ENCODE measurements at regions of chr3 and their contacts with region 1.

Region 1: GRCh38 chr3:149812606-149813366 is at the start of gene RNF13:
- DNase-seq: peak; percentile 83 to 96 (median 93)
- ATAC-seq: peak; percentile 95
- H3K4me3 ChIP-seq: peak within 1 kb of the TSS; percentile 91 to 94
- H3K4me3 Mint-ChIP-seq: peak within 1 kb of the TSS; percentile 99
- H3K27ac ChIP-seq: peak within 1 kb of the TSS; percentile 94 to 95
- H3K27ac Mint-ChIP-seq: peak within 1 kb of the TSS; percentile 100
- H3K4me1 ChIP-seq: peaks cover 29% of the 10 kb centered on the region
- H3K4me1 Mint-ChIP-seq: peaks cover 49% of the 10 kb centered on the region
- H3K27me3 ChIP-seq: no peaks in the 10 kb centered on the region
- H3K27me3 Mint-ChIP-seq: peaks cover 4% of the 10 kb centered on the region
- CTCF ChIP-seq: no peak
- total RNA-seq, gene RNF13: 33.9 to 36.5 TPM

Region 2: DNA sequence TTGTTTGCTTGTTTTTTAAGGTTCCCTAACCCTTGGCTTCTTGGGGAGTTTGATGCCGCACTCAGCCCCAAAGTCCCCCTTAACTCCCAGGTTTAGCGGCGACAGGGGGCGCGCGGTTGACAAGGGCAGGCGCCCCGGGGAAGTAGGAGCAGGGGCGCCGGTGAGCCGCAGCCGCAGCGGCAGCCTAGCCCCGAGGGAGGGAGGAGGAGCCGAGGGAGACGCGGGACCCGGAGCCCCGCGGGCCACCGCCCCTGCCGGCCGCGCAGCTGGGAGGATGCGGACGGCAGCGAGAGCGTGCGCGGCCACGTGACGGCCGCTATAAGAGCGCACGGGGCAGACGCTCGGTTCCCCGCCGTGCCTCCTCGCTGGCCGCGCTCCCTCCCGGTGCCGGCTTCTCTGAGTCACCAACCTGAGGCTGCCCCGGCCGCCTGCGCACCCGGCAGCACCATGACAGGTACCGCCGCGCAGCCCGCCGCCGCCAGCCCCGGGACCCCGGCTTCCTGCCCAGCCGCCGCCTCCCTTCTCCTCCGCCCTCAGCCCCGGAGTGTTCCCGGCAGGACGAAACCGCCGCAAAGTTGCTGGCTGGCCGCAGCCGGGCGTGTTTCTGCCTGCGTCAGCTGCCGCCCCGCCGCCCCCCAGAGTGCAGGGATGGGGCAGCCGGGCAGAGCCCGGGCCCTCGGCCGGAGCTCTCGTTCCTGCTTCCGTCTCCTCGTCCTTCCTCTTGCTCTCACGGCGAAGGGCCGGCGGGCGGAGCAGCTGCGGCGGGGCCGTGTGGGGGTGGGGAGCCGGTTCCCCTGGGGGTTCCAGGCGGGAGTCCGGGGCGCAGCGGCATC is 821.4 kb before region 1 on chr3 and contains the start of gene GYG1:
- CTCF ChIA-PET with region 1: no interaction called
- POLR2A ChIA-PET with region 1: no interaction called
- intact Hi-C with region 1: loop called (anchors 5 kb)
- DNase-seq: peak; percentile 59 to 94 (median 79)
- ATAC-seq: peak; percentile 81
- H3K4me3 ChIP-seq: peak within 1 kb of the TSS; percentile 46 to 66
- H3K4me3 Mint-ChIP-seq: peak within 1 kb of the TSS; percentile 80
- H3K27ac ChIP-seq: peak within 1 kb of the TSS; percentile 69 to 79
- H3K27ac Mint-ChIP-seq: peak within 1 kb of the TSS; percentile 84
- H3K4me1 ChIP-seq: peaks cover 18% of the 10 kb centered on the region
- H3K4me1 Mint-ChIP-seq: peaks cover 35% of the 10 kb centered on the region
- H3K27me3 ChIP-seq: no peaks in the 10 kb centered on the region
- H3K27me3 Mint-ChIP-seq: no peaks in the 10 kb centered on the region
- CTCF ChIP-seq: peak; percentile 45
- total RNA-seq, gene GYG1: 29.4 to 35.2 TPM

Region 3: GRCh38 chr3:149091983-149092382 is 720.8 kb before region 1 on chr3:
- CTCF ChIA-PET with region 1: no interaction called
- POLR2A ChIA-PET with region 1: no interaction called
- intact Hi-C with region 1: no loop called
- DNase-seq: no peak
- ATAC-seq: no peak
- H3K4me3 ChIP-seq: no peak overlapping the region
- H3K4me3 Mint-ChIP-seq: no peak overlapping the region
- H3K27ac ChIP-seq: no peak overlapping the region
- H3K27ac Mint-ChIP-seq: no peak overlapping the region
- H3K4me1 ChIP-seq: no peaks in the 10 kb centered on the region
- H3K4me1 Mint-ChIP-seq: no peaks in the 10 kb centered on the region
- H3K27me3 ChIP-seq: no peaks in the 10 kb centered on the region
- H3K27me3 Mint-ChIP-seq: no peaks in the 10 kb centered on the region
- CTCF ChIP-seq: no peak

Region 4: GRCh38 chr3:149120051-149120972 is 692.5 kb before region 1 on chr3:
- CTCF ChIA-PET with region 1: interaction called, 7 read pairs
- POLR2A ChIA-PET with region 1: no interaction called
- intact Hi-C with region 1: loop called (anchors 1 to 5 kb)
- DNase-seq: peak in 3 of 9 experiments; percentile 15 to 81 (median 72)
- ATAC-seq: peak; percentile 81
- H3K4me3 ChIP-seq: no peak overlapping the region
- H3K4me3 Mint-ChIP-seq: no peak overlapping the region
- H3K27ac ChIP-seq: no peak overlapping the region
- H3K27ac Mint-ChIP-seq: no peak overlapping the region
- H3K4me1 ChIP-seq: no peaks in the 10 kb centered on the region
- H3K4me1 Mint-ChIP-seq: no peaks in the 10 kb centered on the region
- H3K27me3 ChIP-seq: no peaks in the 10 kb centered on the region
- H3K27me3 Mint-ChIP-seq: peaks cover 7% of the 10 kb centered on the region
- CTCF ChIP-seq: peak; percentile 71

Region 5: DNA sequence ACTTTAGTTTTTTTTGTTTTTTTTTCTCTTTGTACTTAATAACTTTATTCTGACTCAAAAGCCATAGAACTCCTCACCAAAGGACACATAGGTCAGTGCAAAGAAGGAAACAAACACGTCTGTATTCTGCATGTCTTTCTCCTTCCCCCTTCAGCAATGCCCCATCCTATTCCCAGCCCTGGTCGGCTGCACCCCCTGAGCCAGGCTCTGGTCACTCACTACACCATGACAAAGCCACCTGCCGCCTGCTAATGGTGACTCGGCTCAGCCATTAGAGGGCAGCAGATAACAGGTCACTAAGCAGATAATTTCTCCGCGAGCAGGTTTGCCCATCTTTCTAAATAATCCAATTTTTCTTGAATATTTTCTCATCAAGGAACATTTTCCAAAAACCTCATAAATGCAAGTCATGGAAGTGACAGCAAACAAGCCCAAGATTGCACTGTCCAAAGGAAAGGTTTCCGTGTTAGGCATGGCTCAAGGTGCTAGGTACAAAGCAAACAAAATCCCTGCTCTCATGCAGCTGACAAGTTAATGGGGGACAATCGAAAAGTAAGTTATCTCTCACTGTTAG is 300.5 kb before region 1 on chr3:
- CTCF ChIA-PET with region 1: no interaction called
- POLR2A ChIA-PET with region 1: no interaction called
- intact Hi-C with region 1: loop called in 1 of 2 experiments (anchors 1 kb)
- DNase-seq: peak in 5 of 9 experiments; percentile 12 to 56 (median 42)
- ATAC-seq: no peak
- H3K4me3 ChIP-seq: no peak overlapping the region
- H3K4me3 Mint-ChIP-seq: no peak overlapping the region
- H3K27ac ChIP-seq: no peak overlapping the region
- H3K27ac Mint-ChIP-seq: no peak overlapping the region
- H3K4me1 ChIP-seq: no peaks in the 10 kb centered on the region
- H3K4me1 Mint-ChIP-seq: peaks cover 9% of the 10 kb centered on the region
- H3K27me3 ChIP-seq: no peaks in the 10 kb centered on the region
- H3K27me3 Mint-ChIP-seq: peaks cover 17% of the 10 kb centered on the region
- CTCF ChIP-seq: no peak

Region 6: DNA sequence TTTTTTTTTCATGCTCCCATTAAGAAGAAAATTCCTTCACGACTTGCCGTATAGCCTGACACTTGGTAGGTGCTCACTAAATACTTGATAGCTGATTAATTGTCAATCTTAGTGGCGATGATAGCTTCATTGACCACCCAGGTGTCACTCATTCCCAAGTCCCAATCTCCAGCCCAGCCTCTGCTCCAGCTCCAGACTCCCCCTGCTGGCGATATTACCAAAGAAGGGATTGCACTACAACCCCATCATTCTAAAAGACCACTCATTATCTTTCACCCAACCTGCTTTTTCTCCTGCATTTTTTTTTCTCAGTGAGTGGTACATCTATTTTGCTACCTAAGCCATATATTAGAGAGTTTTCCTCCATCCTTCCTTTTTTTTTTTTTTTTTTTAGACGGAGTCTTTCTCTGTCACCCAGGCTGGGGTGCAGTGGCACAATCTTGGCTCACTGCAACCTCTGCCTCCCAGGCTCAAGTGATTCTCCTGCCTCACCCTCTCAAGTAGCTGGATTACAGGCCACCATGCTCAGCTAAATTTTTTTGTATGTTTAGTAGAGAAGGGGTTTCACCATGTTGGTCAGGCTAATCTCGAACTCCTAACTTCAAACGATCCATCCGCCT is 41.0 kb before region 1 on chr3:
- CTCF ChIA-PET with region 1: interaction called, 17 read pairs
- POLR2A ChIA-PET with region 1: no interaction called
- intact Hi-C with region 1: no loop called
- DNase-seq: peak in 5 of 9 experiments; percentile 24 to 54 (median 34)
- ATAC-seq: peak; percentile 46
- H3K4me3 ChIP-seq: no peak overlapping the region
- H3K4me3 Mint-ChIP-seq: no peak overlapping the region
- H3K27ac ChIP-seq: no peak overlapping the region
- H3K27ac Mint-ChIP-seq: no peak overlapping the region
- H3K4me1 ChIP-seq: no peaks in the 10 kb centered on the region
- H3K4me1 Mint-ChIP-seq: no peaks in the 10 kb centered on the region
- H3K27me3 ChIP-seq: no peaks in the 10 kb centered on the region
- H3K27me3 Mint-ChIP-seq: peaks cover 14% of the 10 kb centered on the region
- CTCF ChIP-seq: peak; percentile 46

Region 7: GRCh38 chr3:150603153-150603979 is 790.6 kb after region 1 on chr3 and contains the start of gene SELENOT:
- CTCF ChIA-PET with region 1: no interaction called
- POLR2A ChIA-PET with region 1: no interaction called
- intact Hi-C with region 1: loop called in 1 of 2 experiments (anchors 5 kb)
- DNase-seq: peak; percentile 88 to 98 (median 94)
- ATAC-seq: peak; percentile 81
- H3K4me3 ChIP-seq: peak within 1 kb of the TSS; percentile 79 to 86
- H3K4me3 Mint-ChIP-seq: peak within 1 kb of the TSS; percentile 99
- H3K27ac ChIP-seq: peak within 1 kb of the TSS; percentile 88 to 95
- H3K27ac Mint-ChIP-seq: peak within 1 kb of the TSS; percentile 100
- H3K4me1 ChIP-seq: peaks cover 43% of the 10 kb centered on the region
- H3K4me1 Mint-ChIP-seq: peaks cover 71% of the 10 kb centered on the region
- H3K27me3 ChIP-seq: no peaks in the 10 kb centered on the region
- H3K27me3 Mint-ChIP-seq: no peaks in the 10 kb centered on the region
- CTCF ChIP-seq: no peak
- total RNA-seq, gene SELENOT: 130 to 139 TPM

Region 8: DNA sequence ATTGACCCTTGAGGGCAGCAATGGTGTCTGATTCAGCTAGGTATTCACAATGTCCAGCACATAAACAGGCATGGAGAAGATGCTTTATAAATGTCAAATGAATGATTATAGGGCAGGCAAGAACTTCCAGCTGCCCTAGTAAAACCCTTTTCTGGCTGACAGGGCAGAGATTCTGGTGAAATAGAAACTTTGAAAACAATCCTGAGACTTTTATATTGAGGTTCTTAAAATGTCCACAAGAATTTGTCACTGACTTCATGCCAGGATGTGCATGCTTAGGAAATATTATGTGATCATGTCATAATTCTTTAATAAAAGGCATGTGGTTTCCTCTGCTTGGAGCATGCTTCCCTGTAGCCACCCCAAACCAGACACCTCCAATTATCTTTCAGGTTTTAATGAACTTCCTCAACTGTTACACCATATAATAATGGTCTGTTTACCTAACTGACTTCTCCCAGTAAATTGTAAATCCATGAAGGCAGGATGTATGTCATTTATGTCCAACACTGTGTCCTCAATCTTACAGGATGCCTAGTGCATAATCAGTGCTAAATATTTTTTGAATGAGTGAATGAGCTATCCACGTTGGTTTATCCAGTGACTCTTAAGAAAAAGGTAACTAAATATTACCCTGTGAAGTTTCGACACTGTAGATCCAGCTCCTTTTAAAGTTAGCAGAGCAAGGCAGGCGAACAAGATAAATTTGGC is 1203.1 kb after region 1 on chr3:
- CTCF ChIA-PET with region 1: no interaction called
- POLR2A ChIA-PET with region 1: no interaction called
- intact Hi-C with region 1: no loop called
- DNase-seq: no peak
- ATAC-seq: no peak
- H3K4me3 ChIP-seq: no peak overlapping the region
- H3K4me3 Mint-ChIP-seq: no peak overlapping the region
- H3K27ac ChIP-seq: no peak overlapping the region
- H3K27ac Mint-ChIP-seq: no peak overlapping the region
- H3K4me1 ChIP-seq: no peaks in the 10 kb centered on the region
- H3K4me1 Mint-ChIP-seq: no peaks in the 10 kb centered on the region
- H3K27me3 ChIP-seq: no peaks in the 10 kb centered on the region
- H3K27me3 Mint-ChIP-seq: no peaks in the 10 kb centered on the region
- CTCF ChIP-seq: no peak

Measured in CD8-positive, alpha-beta T cell (primary cell).